Naive thymus-derived CD4-positive, alpha-beta T cell (primary cell): ENCODE measurements at regions of chr1 and their contacts with region 1.

Region 1: GRCh38 chr1:55021965-55022546 is 17.3 kb upstream of the PCSK9 start:
- DNase-seq: peak; percentile 13 to 74 (median 34)
- ATAC-seq: peak; percentile 98
- H3K4me3 ChIP-seq: no peak overlapping the region
- H3K4me3 Mint-ChIP-seq: no peak overlapping the region
- H3K27ac ChIP-seq: no peak overlapping the region
- H3K27ac Mint-ChIP-seq: no peak overlapping the region
- H3K4me1 ChIP-seq: no peaks in the 10 kb centered on the region
- H3K4me1 Mint-ChIP-seq: peaks cover 0 to 13% (median 0%) of the 10 kb centered on the region in 7 donors
- H3K27me3 ChIP-seq: no peaks in the 10 kb centered on the region
- H3K27me3 Mint-ChIP-seq: peaks cover 5 to 13% (median 7%) of the 10 kb centered on the region in 5 donors

Region 2: DNA sequence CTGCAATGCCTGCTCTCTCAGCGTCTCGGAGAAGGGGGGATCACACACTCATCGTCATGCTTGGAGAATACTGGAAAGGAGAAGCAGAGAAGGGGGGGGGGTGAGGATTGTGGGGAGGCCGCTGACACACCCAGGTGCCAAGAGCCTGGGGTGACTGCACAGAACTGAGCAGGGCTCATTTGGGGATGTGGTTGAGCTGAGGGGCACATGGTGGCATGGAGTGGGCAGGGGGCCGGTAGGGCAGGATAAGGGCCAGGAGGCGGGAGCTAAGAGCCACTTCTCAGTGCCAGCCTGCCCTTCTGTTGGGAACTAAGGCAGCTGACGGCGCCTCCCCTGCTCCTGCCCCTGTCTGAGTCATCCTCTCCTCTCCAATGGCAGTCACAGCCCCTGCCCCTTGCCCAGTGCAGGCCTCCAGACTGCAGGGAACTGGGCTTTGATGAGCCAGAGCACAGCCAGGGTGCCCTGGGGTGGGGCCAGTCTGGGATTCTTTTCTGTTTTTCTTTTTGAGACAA is 794.9 kb before region 1 on chr1:
- CTCF ChIA-PET with region 1: no interaction called
- POLR2A ChIA-PET with region 1: no interaction called
- intact Hi-C with region 1: no loop called
- DNase-seq: no peak
- ATAC-seq: peak; percentile 72
- H3K4me3 ChIP-seq: no peak overlapping the region
- H3K4me3 Mint-ChIP-seq: no peak overlapping the region
- H3K27ac ChIP-seq: no peak overlapping the region
- H3K27ac Mint-ChIP-seq: peak overlapping the region in 3 of 9 donors; percentile 13 to 38 (median 34)
- H3K4me1 ChIP-seq: peaks cover 0 to 5% of the 10 kb centered on the region in 2 donors
- H3K4me1 Mint-ChIP-seq: peaks cover 5 to 24% (median 14%) of the 10 kb centered on the region in 7 donors
- H3K27me3 ChIP-seq: no peaks in the 10 kb centered on the region
- H3K27me3 Mint-ChIP-seq: no peaks in the 10 kb centered on the region

Region 3: DNA sequence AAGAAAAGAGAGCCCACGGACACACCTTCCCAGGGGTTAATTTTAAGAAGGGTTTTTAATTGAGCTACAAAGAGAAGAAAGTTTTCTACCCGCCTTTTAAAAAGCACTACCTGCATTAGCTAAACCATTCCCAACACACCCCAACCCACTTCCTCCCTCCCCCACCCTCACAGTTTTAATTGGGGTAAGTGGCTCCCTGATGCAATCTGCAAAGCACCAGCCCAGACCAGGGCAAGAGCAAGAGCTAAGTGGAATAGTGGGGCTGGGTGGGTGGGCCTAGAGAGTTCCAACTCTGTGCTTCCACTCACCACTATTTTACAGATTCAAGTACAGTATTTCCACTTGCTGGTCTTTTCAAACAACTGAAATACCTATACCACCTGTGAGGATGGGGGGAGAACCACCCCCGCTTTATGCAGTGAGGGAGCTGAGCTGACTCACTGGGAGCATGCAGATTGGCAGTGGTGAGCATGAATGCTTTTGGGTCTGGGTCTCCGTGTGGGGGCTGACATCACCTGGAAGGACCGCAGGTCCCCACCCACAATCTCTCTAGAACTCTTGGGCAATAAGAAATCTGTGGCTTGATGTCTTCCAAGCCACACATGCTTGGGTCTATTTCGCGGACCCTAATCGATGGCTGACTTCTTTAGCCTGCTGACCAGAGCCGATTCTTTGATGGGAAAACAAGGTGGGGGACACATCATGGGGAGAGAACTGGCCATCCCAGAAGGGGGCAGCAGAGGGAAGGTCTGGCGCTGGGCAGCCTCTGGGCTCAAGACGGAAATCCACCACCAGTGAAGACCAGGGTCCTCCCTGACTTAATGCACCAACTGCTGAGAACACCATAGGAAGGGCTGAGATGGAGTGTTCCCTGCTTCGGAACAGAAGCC is 711.4 kb before region 1 on chr1:
- CTCF ChIA-PET with region 1: no interaction called
- POLR2A ChIA-PET with region 1: no interaction called
- intact Hi-C with region 1: no loop called
- DNase-seq: peak in 2 of 9 donors; percentile 20 to 25
- ATAC-seq: peak; percentile 22
- H3K4me3 ChIP-seq: peak overlapping the region; percentile 20
- H3K4me3 Mint-ChIP-seq: peak overlapping the region; percentile 59 to 85 (median 78)
- H3K27ac ChIP-seq: peak overlapping the region; percentile 53
- H3K27ac Mint-ChIP-seq: peak overlapping the region; percentile 6 to 93 (median 89)
- H3K4me1 ChIP-seq: peaks cover 4 to 65% of the 10 kb centered on the region in 2 donors
- H3K4me1 Mint-ChIP-seq: peaks cover 46 to 96% (median 88%) of the 10 kb centered on the region in 7 donors
- H3K27me3 ChIP-seq: no peaks in the 10 kb centered on the region
- H3K27me3 Mint-ChIP-seq: no peaks in the 10 kb centered on the region

Region 4: DNA sequence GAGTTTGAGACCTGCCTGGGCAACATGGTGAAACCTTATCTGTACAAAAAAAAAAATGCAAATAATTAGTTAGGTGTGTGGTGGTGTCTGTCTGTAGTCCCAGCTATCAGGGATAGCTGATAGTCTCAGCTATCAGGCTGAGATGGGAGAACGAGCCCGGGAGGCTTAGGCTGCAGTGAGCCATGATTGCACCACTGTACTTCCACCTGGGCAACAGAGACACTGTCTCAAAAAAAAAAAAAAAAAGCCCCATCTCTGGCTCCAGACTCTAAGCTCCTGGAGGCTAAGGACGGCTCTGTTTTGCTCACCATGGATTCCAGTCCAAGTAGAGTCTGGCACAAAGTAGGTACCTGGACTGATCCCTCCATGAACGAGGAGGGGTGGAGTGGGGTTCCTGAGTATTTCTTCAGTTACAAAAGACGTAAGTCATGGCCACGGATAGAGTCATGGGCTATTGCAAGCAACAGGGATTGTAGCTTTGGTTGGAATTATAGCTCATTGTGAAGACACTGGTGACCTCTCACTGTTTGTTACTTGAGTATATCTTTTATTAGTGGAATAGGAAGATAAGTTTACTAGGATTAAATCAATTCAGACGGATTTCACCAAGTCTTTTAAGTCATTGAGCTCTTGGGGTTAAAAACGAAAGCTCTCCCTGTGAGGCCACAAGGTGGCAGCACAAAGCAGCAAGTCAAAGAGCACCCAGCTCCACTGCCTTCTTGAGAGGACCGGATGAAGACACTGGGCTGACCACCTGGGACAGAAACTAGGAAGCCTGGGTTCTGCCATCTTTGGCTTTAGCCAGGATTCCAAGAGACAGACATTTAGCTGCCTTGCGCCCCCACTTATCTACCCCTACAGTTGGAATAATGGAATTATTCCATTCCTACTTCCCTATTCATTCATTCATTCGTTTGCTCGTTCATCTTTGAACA is 77.2 kb before region 1 on chr1:
- CTCF ChIA-PET with region 1: interaction called, 5 read pairs
- POLR2A ChIA-PET with region 1: no interaction called
- intact Hi-C with region 1: loop called (anchors 1 kb)
- DNase-seq: peak; percentile 17 to 61 (median 45)
- ATAC-seq: peak; percentile 80
- H3K4me3 ChIP-seq: no peak overlapping the region
- H3K4me3 Mint-ChIP-seq: peak overlapping the region in 1 of 10 donors; percentile 28
- H3K27ac ChIP-seq: no peak overlapping the region
- H3K27ac Mint-ChIP-seq: no peak overlapping the region
- H3K4me1 ChIP-seq: peaks cover 3 to 7% of the 10 kb centered on the region in 2 donors
- H3K4me1 Mint-ChIP-seq: peaks cover 9 to 16% (median 11%) of the 10 kb centered on the region in 7 donors
- H3K27me3 ChIP-seq: no peaks in the 10 kb centered on the region
- H3K27me3 Mint-ChIP-seq: peaks cover 0 to 11% (median 0%) of the 10 kb centered on the region in 5 donors

Region 5: DNA sequence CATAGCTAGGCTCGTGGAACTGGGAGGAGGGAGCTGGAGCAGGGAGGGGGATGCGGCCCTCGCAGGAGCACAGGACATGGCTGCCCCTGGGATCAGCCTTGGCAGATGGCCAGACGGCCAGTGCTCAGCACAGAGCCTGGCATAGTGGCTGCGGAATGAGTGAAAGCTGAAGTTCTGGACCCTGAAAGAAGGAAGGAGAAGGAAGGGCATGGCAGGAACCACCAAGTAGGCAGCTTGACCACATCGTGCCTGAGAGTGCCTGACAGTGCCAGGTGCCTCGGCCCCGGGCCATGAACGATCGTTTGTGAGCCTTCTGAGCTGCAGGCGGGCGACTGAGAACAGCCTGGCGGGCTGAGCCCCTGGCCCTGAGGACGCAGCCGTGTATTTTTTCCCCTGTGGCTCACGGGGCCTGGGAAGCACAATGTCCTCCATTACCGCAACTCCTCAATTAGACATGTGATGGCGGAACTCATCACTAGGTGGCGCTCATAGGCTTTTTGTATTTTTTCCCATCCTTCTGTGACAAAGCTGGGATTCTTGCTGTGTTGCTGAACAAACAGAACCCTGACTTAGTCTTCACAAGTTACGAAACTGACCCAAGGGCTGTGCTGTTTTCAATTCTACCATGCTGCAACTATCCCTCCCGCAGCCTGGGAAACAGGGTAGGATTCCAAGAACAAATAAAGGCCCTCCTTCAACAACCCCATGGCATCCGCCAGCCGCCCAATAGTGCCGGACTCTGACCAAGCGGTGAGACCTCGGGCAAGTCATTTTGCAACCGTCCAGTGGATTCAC is 71.5 kb before region 1 on chr1:
- CTCF ChIA-PET with region 1: interaction called, 5 read pairs
- POLR2A ChIA-PET with region 1: no interaction called
- intact Hi-C with region 1: loop called (anchors 1 kb)
- DNase-seq: peak in 5 of 9 donors; percentile 7 to 53 (median 22)
- ATAC-seq: peak; percentile 65
- H3K4me3 ChIP-seq: no peak overlapping the region
- H3K4me3 Mint-ChIP-seq: peak overlapping the region in 3 of 10 donors; percentile 25 to 48 (median 43)
- H3K27ac ChIP-seq: no peak overlapping the region
- H3K27ac Mint-ChIP-seq: no peak overlapping the region
- H3K4me1 ChIP-seq: peaks cover 0 to 4% of the 10 kb centered on the region in 2 donors
- H3K4me1 Mint-ChIP-seq: peaks cover 0 to 17% (median 4%) of the 10 kb centered on the region in 7 donors
- H3K27me3 ChIP-seq: no peaks in the 10 kb centered on the region
- H3K27me3 Mint-ChIP-seq: peaks cover 0 to 11% (median 4%) of the 10 kb centered on the region in 5 donors

Region 6: GRCh38 chr1:54987919-54988705 is 33.9 kb before region 1 on chr1:
- CTCF ChIA-PET with region 1: no interaction called
- POLR2A ChIA-PET with region 1: no interaction called
- intact Hi-C with region 1: no loop called
- DNase-seq: no peak
- ATAC-seq: no peak
- H3K4me3 ChIP-seq: no peak overlapping the region
- H3K4me3 Mint-ChIP-seq: no peak overlapping the region
- H3K27ac ChIP-seq: no peak overlapping the region
- H3K27ac Mint-ChIP-seq: no peak overlapping the region
- H3K4me1 ChIP-seq: no peaks in the 10 kb centered on the region
- H3K4me1 Mint-ChIP-seq: peaks cover 0 to 1% (median 0%) of the 10 kb centered on the region in 7 donors
- H3K27me3 ChIP-seq: no peaks in the 10 kb centered on the region
- H3K27me3 Mint-ChIP-seq: peaks cover 0 to 16% (median 8%) of the 10 kb centered on the region in 5 donors